ENCODE measurements at regions of chr1 and their contacts with region 1.

Region 1: GRCh38 chr1:60848583-60849188 is 233.7 kb upstream of the NFIA start:
- DNase-seq: peak; percentile 20
- H3K4me3 ChIP-seq: no peak overlapping the region
- H3K27ac ChIP-seq: no peak overlapping the region
- H3K4me1 ChIP-seq: peaks cover 5% of the 10 kb centered on the region
- H3K27me3 ChIP-seq: no peaks in the 10 kb centered on the region
- CTCF ChIP-seq: peak; percentile 45 to 71

Region 2: GRCh38 chr1:59971464-59971911 is 877.2 kb before region 1 on chr1:
- CTCF ChIA-PET with region 1: no interaction called
- dilution Hi-C with region 1: no loop called
- in situ Hi-C with region 1: no loop called
- intact Hi-C with region 1: loop called (anchors 10 kb)
- DNase-seq: peak; percentile 55
- H3K4me3 ChIP-seq: no peak overlapping the region
- H3K27ac ChIP-seq: no peak overlapping the region
- H3K4me1 ChIP-seq: no peaks in the 10 kb centered on the region
- H3K27me3 ChIP-seq: peaks cover 7% of the 10 kb centered on the region
- CTCF ChIP-seq: peak; percentile 83 to 93

Region 3: GRCh38 chr1:60963167-60963940 is 114.7 kb after region 1 on chr1:
- CTCF ChIA-PET with region 1: interaction called, 13 read pairs
- dilution Hi-C with region 1: no loop called
- in situ Hi-C with region 1: no loop called
- intact Hi-C with region 1: no loop called
- DNase-seq: peak; percentile 17
- H3K4me3 ChIP-seq: no peak overlapping the region
- H3K27ac ChIP-seq: no peak overlapping the region
- H3K4me1 ChIP-seq: peaks cover 13% of the 10 kb centered on the region
- H3K27me3 ChIP-seq: no peaks in the 10 kb centered on the region
- CTCF ChIP-seq: no peak

Region 4: GRCh38 chr1:60969971-60970509 is 121.4 kb after region 1 on chr1:
- CTCF ChIA-PET with region 1: no interaction called
- dilution Hi-C with region 1: no loop called
- in situ Hi-C with region 1: no loop called
- intact Hi-C with region 1: loop called (anchors 2 kb)
- DNase-seq: peak; percentile 46
- H3K4me3 ChIP-seq: no peak overlapping the region
- H3K27ac ChIP-seq: no peak overlapping the region
- H3K4me1 ChIP-seq: peaks cover 33% of the 10 kb centered on the region
- H3K27me3 ChIP-seq: no peaks in the 10 kb centered on the region
- CTCF ChIP-seq: peak; percentile 47 to 52